ENCODE measurements at regions of chr12 and their contacts with region 1.

Region 1: DNA sequence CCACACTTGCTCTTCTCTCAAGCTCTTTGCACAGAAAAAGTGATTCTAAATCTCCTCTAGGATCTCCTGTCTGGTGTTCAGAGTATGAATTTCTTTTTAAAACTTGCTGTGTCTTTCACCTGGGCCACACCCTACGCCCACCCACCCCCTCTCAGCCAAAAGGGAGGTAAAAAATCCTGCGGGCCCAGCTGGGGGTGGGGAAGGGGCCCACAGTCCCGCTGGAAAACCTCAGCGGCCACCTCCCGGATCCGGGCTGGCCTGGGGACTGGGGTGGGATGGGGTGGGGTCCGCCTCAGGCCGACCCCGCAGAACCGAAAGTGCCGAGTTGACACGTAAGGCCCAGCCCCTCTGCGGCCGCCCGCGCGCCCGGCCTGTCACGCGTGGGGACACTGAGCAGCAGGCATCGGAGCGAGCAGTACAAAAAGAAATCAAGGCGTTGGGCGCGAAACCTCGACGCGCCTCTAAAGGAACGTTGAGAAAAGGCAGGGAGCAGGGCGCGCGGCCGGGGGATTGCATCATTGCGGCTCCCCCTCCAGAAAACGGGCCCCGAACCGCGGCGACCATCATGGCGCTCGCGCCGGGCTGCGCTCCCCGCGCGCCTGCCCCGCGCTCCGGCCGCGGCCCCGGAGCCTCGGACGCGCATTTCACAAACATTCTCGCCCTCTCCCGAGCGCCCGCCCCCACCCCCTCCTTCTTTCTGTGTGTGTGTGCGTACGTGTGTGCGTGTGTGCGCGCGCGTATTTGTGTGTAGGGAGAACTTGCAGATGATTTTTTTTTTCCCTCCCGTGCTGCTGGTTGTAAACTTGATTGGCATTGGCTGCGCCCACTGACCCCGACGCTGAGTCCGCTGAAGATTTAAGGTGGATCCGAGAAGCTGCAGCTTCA is 7.7 kb downstream of the CDKN1B start:
- DNase-seq: peak; percentile 95
- H3K4me3 ChIP-seq: peak overlapping the region; percentile 88
- H3K27ac ChIP-seq: peak overlapping the region; percentile 98
- H3K4me1 ChIP-seq: peaks cover 52% of the 10 kb centered on the region
- CTCF ChIP-seq: no peak

Region 2: DNA sequence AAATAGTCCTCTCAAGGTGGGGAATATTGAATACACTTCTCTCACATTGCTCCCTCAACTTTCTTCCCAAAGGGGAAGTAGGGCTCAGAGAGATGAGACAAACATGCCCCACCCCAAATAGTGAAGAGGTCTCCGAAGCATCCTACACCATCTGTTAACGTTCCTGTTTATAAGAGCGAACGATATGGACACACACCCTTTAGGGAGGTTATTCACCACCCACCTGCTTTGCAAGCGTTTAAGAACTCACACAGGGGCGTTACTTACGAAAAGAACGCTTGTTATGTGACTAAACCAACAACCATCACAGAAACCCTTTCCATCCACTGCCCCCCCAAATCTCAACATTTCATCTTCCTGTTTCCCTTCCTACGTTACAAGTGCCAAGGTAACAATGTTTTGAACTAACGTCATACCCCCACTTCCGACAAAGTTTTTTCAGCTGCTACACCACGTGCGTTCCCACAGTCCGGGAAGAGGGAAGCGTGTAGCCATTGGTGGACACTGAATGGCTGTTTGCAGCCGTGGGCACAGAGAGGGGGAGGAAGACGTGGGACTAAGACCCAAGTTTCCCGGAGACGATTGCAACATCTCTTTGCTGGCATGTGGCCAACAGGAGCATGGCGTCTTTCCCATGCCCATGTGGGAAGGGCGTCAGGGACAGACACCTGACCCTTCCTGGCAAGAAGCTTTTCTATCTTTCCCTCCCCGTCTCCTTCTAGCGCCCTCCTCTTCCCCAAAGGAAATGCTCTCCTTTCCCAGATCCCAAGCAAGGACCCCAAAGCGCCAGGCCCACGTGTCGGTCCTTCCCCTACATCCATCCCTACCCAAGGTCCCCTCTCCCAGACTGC is 2003.0 kb before region 1 on chr12:
- CTCF ChIA-PET with region 1: no interaction called
- POLR2A ChIA-PET with region 1: no interaction called
- intact Hi-C with region 1: loop called (anchors 5 kb)
- DNase-seq: peak; percentile 71
- H3K4me3 ChIP-seq: peak overlapping the region; percentile 80
- H3K27ac ChIP-seq: peak overlapping the region; percentile 55
- H3K4me1 ChIP-seq: peaks cover 28% of the 10 kb centered on the region
- CTCF ChIP-seq: no peak

Region 3: GRCh38 chr12:12356886-12357718 is 367.8 kb before region 1 on chr12 and contains the start of gene BORCS5:
- CTCF ChIA-PET with region 1: no interaction called
- POLR2A ChIA-PET with region 1: interaction called, 24 read pairs
- intact Hi-C with region 1: loop called (anchors 1 kb)
- DNase-seq: peak; percentile 99
- H3K4me3 ChIP-seq: peak within 1 kb of the TSS; percentile 81
- H3K27ac ChIP-seq: peak within 1 kb of the TSS; percentile 82
- H3K4me1 ChIP-seq: peaks cover 18% of the 10 kb centered on the region
- CTCF ChIP-seq: peak; percentile 55
- total RNA-seq, gene BORCS5: 9.6 and 10.4 TPM in 2 replicates

Region 4: GRCh38 chr12:12736759-12737676 is 12.1 kb after region 1 on chr12:
- CTCF ChIA-PET with region 1: interaction called, 4 read pairs
- POLR2A ChIA-PET with region 1: interaction called, 43 read pairs
- intact Hi-C with region 1: no loop called
- DNase-seq: peak; percentile 70
- H3K4me3 ChIP-seq: peak overlapping the region; percentile 17
- H3K27ac ChIP-seq: peak overlapping the region; percentile 72
- H3K4me1 ChIP-seq: peaks cover 17% of the 10 kb centered on the region
- CTCF ChIP-seq: peak; percentile 95

Region 5: GRCh38 chr12:12786716-12787601 is 62.1 kb after region 1 on chr12:
- CTCF ChIA-PET with region 1: no interaction called
- POLR2A ChIA-PET with region 1: no interaction called
- intact Hi-C with region 1: no loop called
- DNase-seq: no peak
- H3K4me3 ChIP-seq: no peak overlapping the region
- H3K27ac ChIP-seq: no peak overlapping the region
- H3K4me1 ChIP-seq: peaks cover 7% of the 10 kb centered on the region
- CTCF ChIP-seq: no peak

Region 6: GRCh38 chr12:12803186-12803585 is 78.3 kb after region 1 on chr12:
- CTCF ChIA-PET with region 1: no interaction called
- POLR2A ChIA-PET with region 1: no interaction called
- intact Hi-C with region 1: no loop called
- DNase-seq: peak; percentile 14
- H3K4me3 ChIP-seq: no peak overlapping the region
- H3K27ac ChIP-seq: no peak overlapping the region
- H3K4me1 ChIP-seq: peaks cover 12% of the 10 kb centered on the region
- CTCF ChIP-seq: no peak

Region 7: DNA sequence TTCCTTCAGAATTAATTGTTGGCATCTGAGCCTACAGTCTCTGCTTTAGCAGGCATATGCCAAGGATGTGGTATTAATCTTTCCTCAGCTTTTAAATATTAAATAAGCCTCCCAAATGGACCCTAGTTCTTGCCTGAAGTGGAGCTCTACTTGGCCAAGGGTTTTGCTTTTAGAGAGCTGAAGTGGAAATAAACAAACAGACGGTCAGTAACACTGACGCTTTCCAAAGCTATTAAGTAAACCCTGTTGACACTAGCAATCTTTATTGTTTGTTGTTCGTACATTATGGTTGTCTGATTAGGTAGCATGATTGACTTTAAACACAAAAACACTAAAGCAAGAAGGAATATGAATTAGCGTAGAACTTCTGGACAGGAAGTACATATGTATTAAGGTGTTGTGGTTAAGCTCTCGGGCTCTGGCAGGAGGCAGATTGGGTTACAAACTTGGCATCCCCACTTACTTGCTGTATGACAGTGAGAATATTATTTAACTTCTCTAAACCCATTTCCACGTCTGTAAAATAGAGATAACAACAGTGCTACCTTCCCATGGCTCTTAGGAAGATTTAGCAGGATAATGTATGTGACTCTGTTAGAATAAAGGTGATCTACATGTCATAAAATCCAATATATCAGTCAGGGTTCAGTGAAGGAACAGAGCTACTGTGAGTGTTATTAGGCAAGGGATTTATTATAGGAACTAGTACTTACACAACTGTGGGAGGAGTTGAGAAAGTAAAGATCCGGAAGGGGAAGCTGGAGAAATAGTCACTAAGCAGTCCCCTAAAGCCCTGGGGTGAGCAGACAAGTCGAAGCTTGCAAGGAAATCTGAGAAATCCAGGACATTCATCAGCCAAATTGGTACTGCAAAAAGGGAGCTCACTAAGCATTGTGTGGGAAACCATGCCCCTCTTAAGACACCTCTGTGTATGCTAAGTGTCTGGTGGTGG is 1548.3 kb after region 1 on chr12:
- CTCF ChIA-PET with region 1: no interaction called
- POLR2A ChIA-PET with region 1: no interaction called
- intact Hi-C with region 1: loop called (anchors 10 kb)
- DNase-seq: peak; percentile 50
- H3K4me3 ChIP-seq: peak overlapping the region; percentile 16
- H3K27ac ChIP-seq: peak overlapping the region; percentile 51
- H3K4me1 ChIP-seq: peaks cover 49% of the 10 kb centered on the region
- CTCF ChIP-seq: no peak

Measured in OCI-LY7 (cell line).